Motor neuron (in vitro differentiated cells): ENCODE measurements at regions of chr18 and their contacts with region 1.

Region 1: DNA sequence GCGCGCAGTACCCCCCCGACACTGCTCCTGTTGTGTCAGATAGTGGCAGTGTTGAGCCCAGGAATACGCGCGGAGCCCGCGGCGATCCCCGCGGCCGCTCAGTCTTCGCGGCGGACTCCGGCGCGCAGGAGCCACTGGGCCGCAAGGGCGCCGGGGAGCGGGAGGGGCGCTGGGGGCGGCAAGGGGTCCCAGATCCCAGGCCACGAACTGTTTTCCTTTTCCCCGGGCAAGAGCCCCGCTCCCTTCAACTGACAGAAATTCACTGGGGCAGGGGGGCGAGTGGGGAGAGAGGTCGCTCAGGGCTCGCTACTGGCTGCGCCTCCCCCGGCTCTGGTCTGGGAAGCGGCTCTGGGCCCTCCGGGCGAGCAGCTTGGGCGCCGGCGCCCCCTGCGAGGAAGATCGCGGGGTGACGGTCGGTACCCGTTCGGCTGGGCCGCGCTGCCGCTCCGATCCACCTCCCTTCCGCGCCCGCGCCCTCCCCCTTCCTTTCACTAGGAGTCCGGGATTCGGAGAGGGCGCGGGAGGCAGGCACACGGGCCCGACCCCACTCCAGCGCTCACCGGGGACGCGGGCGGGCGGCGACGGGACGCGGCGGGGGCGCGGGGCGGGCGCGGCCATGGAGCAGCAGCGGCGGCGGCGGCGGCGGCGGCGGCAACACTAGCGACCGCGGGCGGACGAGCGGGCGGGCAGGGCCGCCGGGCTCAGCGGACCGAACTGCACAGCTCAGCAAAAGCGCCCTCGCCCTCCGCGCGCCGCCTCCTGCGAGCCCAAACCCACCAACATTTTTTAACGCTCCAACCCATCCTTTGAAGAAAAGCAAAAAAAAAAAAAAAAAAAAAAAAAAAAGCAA is 1.4 kb upstream of the SETBP1 start:
- ATAC-seq: peak; percentile 83 to 90 (median 88)
- H3K4me3 ChIP-seq: peak overlapping the region; percentile 83 to 88 (median 84)
- H3K27ac ChIP-seq: peak overlapping the region; percentile 92 to 97
- H3K4me1 ChIP-seq: peaks cover 13 to 14% of the 10 kb centered on the region in 2 donors

Region 2: GRCh38 chr18:44803019-44803650 is 123.9 kb after region 1 on chr18:
- in situ Hi-C with region 1: loop called in 1 of 9 experiments (anchors 25 kb)
- ATAC-seq: peak; percentile 55 to 99 (median 98)
- H3K4me3 ChIP-seq: no peak overlapping the region
- H3K27ac ChIP-seq: peak overlapping the region; percentile 62 to 68
- H3K4me1 ChIP-seq: peaks cover 14 to 22% of the 10 kb centered on the region in 2 donors

Region 3: GRCh38 chr18:44895176-44895798 is 216.0 kb after region 1 on chr18:
- in situ Hi-C with region 1: loop called in 1 of 9 experiments (anchors 25 kb)
- ATAC-seq: peak in 3 of 8 experiments; percentile 50 to 72 (median 69)
- H3K4me3 ChIP-seq: no peak overlapping the region
- H3K27ac ChIP-seq: no peak overlapping the region
- H3K4me1 ChIP-seq: peaks cover 11 to 18% of the 10 kb centered on the region in 2 donors

Region 4: DNA sequence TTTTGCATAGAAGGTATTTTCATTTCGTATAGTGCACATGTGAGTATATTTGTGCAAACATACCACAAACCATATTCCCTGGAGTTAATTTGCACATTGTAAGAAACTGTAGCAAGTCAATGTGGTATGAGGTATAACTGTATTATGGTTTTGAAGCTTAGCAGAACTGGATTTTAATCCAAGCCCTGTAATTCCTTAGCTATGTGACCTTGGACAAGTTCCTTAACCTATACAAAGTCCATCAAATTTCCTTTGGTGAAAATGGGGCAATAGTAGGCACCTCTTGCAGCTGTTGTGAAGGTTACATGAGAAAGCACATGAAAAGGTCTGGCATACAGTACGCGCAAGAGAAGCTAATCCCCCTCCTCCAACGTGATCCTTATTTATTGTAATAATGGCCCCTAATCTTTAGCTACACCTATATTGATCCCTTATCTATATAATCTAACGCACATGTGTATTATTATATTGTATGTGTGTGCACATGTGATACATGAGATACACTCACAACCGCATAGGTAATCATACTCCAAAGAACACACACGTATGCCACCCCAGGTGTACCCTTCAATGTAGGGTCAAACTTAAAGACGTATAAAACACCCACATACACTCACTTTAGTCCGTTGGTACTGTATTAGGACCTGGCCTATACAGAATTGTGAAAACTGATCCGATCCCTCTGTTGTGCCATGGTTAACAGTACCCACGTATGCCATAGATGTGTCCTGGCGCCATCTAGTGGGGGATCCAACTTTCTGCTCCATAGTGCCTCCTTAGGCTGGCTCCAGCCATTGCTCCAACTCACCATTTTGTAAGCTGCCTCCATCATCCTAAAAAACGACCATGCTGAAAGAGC is 533.1 kb after region 1 on chr18:
- in situ Hi-C with region 1: loop called in 1 of 9 experiments (anchors 25 kb)
- ATAC-seq: peak; percentile 61 to 100 (median 94)
- H3K4me3 ChIP-seq: no peak overlapping the region
- H3K27ac ChIP-seq: no peak overlapping the region
- H3K4me1 ChIP-seq: peaks cover 0 to 4% of the 10 kb centered on the region in 2 donors